ENCODE measurements at regions of chr17 and their contacts with region 1.

Region 1: DNA sequence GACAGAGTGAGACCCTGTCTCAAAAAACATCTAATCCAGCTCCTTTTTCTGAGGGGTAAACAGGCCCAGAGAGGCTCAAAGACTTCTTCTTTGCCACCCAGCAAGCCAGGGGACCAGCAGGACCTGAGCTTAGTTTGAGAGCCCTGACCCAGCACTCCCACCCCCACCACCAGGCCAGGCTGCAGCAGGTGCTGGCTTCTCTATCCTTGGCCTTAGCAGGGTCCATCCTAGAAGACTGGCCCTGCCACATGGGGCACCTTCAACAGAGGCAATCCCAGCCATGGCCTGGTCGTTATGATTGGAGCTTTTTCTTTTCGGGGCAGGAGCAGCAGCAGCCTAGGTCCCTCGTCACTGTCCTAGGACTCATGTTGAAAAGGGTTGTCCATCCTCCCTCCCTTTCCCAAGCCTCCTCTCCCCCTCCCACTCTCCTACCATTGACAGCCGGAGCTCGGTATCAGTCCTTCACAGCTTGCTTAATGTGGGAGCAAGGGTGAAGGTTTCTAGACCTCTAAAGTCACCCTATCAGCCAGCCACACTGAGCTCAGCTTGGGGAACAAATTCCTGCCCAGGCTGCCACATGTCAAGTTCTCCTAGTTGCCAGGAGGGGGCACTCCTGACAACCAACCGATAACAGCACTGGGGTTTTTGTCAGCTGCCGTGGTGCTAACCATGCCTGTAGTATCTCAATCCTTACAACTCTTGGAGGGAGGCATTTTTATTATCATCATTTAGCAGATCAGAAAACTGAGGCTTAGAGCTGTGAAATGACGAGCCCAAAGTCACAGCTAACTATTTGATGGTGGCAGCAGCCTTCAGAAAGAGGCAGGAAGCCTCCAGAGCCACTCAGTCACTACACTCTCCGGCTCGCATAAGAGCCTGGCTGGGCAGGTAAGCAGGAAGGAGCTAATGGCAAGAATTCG is 11.2 kb downstream of the MRPL27 start:
- DNase-seq: peak; percentile 77
- ATAC-seq: peak; percentile 82
- H3K4me3 Mint-ChIP-seq: no peak overlapping the region
- H3K27ac Mint-ChIP-seq: peak overlapping the region; percentile 73
- H3K4me1 Mint-ChIP-seq: peaks cover 18% of the 10 kb centered on the region
- H3K27me3 Mint-ChIP-seq: no peaks in the 10 kb centered on the region

Region 2: DNA sequence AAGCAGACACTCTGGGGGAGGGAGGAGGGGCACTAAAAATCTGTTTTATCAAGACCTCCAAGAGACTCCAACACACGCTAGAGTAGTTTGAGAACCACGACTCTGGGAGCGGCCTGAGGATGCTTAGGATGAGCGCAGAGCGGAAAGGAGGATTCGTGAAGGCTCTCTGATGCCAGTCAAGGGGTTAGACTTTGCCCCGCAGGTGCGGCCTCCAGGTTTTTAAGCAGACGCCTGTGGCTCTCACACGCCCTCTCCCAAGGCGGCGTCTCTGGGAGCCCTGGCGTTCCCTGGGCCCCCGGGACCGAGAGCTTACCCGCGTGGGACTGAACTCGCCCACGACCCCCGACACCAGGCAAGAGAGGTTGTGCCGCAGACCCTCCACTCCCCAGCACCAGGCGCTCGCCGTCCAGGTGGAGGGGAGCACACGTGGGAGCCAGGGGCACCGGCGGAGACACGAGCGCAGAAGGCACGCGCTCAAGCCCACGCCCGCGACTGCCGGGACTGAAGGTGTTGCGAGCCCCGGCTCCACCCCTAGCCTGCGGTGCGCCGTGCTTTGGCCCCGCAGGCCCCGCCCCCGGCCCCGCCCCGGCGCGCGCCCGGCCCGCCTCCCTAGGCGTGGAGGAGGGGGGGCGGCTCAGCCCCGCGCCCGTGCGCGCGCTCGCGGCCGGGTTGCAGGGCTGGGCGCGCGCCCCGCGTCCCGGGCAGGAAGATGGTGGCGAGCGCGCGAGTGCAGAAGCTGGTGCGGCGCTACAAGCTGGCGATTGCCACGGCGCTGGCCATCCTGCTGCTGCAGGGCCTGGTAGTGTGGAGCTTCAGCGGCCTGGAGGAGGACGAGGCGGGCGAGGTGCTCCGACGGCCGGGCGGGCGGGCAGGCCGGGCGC is 16.1 kb before region 1 on chr17 and contains the start of gene XYLT2:
- CTCF ChIA-PET with region 1: interaction called, 32 read pairs
- DNase-seq: peak; percentile 91
- ATAC-seq: peak; percentile 93
- H3K4me3 Mint-ChIP-seq: peak within 1 kb of the TSS; percentile 86
- H3K27ac Mint-ChIP-seq: peak within 1 kb of the TSS; percentile 91
- H3K4me1 Mint-ChIP-seq: peaks cover 39% of the 10 kb centered on the region
- H3K27me3 Mint-ChIP-seq: peaks cover 2% of the 10 kb centered on the region
- total RNA-seq, gene XYLT2: 33.1 to 38.2 TPM

Region 3: GRCh38 chr17:50372758-50373556 is 11.1 kb after region 1 on chr17 and contains the starts of genes EME1 and MRPL27:
- CTCF ChIA-PET with region 1: interaction called, 64 read pairs
- DNase-seq: peak; percentile 93
- ATAC-seq: peak; percentile 94
- H3K4me3 Mint-ChIP-seq: peak within 1 kb of the TSS; percentile 94
- H3K27ac Mint-ChIP-seq: peak within 1 kb of the TSS; percentile 99
- H3K4me1 Mint-ChIP-seq: peaks cover 34% of the 10 kb centered on the region
- H3K27me3 Mint-ChIP-seq: no peaks in the 10 kb centered on the region
- total RNA-seq, gene EME1: 34.0 to 40.8 TPM
- total RNA-seq, gene MRPL27: 65.7 to 81.8 TPM

Region 4: DNA sequence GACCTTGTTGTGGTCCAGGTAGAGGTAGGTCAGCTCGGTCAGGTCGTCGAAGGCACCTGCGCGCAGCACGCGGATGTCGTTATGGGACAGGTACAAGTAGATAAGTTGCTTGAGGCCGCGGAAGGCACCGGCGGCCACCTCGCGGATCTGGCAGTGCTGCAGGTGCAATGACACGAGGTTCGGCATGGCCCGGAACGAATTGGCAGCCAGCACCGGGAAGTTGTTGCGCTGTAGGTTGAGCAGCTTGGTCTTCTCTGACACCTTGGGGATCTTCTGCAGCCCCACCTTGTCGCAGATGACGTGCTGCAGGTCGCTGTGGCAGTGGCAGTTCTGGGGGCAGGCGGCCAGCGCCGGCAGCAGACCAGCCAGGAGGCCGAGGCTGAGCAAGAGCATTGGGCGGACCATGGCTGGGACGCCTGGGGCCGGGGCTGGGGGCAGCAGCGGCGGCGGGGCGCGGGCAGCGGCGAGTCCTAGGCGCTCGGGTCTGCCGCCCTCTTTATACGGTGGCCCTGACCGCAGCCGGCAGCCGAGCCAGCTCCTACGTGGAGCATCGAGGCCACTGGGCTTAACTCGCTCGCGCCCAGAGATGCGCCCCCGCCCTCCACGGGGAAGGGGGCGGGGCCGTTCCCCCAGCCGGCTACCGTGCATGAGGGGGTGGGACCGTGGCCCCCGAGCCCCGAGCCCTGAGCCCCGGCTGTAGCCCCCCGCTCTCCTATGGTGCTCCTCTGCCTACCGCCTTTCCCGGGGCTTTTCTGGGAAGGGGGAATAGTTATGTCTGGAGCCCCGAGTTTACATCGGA is 106.8 kb after region 1 on chr17 and contains the start of gene CHAD:
- CTCF ChIA-PET with region 1: no interaction called
- DNase-seq: no peak
- ATAC-seq: peak; percentile 24
- H3K4me3 Mint-ChIP-seq: no peak within 1 kb of the TSS
- H3K27ac Mint-ChIP-seq: no peak within 1 kb of the TSS
- H3K4me1 Mint-ChIP-seq: peaks cover 6% of the 10 kb centered on the region
- H3K27me3 Mint-ChIP-seq: peaks cover 17% of the 10 kb centered on the region
- total RNA-seq, gene CHAD: not detected

Measured in activated CD8-positive, alpha-beta memory T cell treated with anti-CD3 and anti-CD28 coated beads, Interleukin-2, amount 10 ng/mL, durations not matched to agents 7 days and 5 days (primary cell).